ENCODE measurements at regions of chr16 and their contacts with region 1.

Region 1: GRCh38 chr16:2969545-2970521 is 685 bp downstream of the PAQR4 start:
- DNase-seq: peak; percentile 73
- H3K4me3 ChIP-seq: peak overlapping the region; percentile 63 to 88 (median 72)
- H3K27ac ChIP-seq: peak overlapping the region; percentile 45
- H3K4me1 ChIP-seq: peaks cover 36% of the 10 kb centered on the region
- H3K27me3 ChIP-seq: no peaks in the 10 kb centered on the region
- CTCF ChIP-seq: peak; percentile 20 to 68

Region 2: GRCh38 chr16:3017794-3018506 is 48.1 kb after region 1 on chr16 and contains the start of gene CLDN6:
- CTCF ChIA-PET with region 1: no interaction called
- dilution Hi-C with region 1: loop called (anchors 5 kb)
- in situ Hi-C with region 1: no loop called
- intact Hi-C with region 1: no loop called
- DNase-seq: no peak
- H3K4me3 ChIP-seq: no peak within 1 kb of the TSS
- H3K27ac ChIP-seq: no peak within 1 kb of the TSS
- H3K4me1 ChIP-seq: peaks cover 18% of the 10 kb centered on the region
- H3K27me3 ChIP-seq: peaks cover 3% of the 10 kb centered on the region
- CTCF ChIP-seq: peak in 1 of 2 donors; percentile 24
- total RNA-seq, gene CLDN6: not detected

Region 3: GRCh38 chr16:3029537-3030402 is 59.9 kb after region 1 on chr16:
- CTCF ChIA-PET with region 1: no interaction called
- dilution Hi-C with region 1: no loop called
- in situ Hi-C with region 1: no loop called
- intact Hi-C with region 1: no loop called
- DNase-seq: no peak
- H3K4me3 ChIP-seq: no peak overlapping the region
- H3K27ac ChIP-seq: no peak overlapping the region
- H3K4me1 ChIP-seq: peaks cover 14% of the 10 kb centered on the region
- H3K27me3 ChIP-seq: no peaks in the 10 kb centered on the region
- CTCF ChIP-seq: no peak